MCF 10A (cell line): ENCODE measurements at regions of chr13 and their contacts with region 1.

Region 1: GRCh38 chr13:33228648-33229445 is 56.7 kb downstream of the STARD13 start:
- DNase-seq: peak; percentile 61
- H3K4me3 Mint-ChIP-seq: peak overlapping the region; percentile 9
- H3K27ac Mint-ChIP-seq: peak overlapping the region; percentile 46
- H3K4me1 Mint-ChIP-seq: peaks cover 49% of the 10 kb centered on the region
- H3K27me3 Mint-ChIP-seq: no peaks in the 10 kb centered on the region
- CTCF ChIP-seq: peak; percentile 89

Region 2: GRCh38 chr13:33153421-33154404 is 75.1 kb before region 1 on chr13:
- CTCF ChIA-PET with region 1: no interaction called
- POLR2A ChIA-PET with region 1: no interaction called
- intact Hi-C with region 1: no loop called
- DNase-seq: no peak
- H3K4me3 Mint-ChIP-seq: no peak overlapping the region
- H3K27ac Mint-ChIP-seq: no peak overlapping the region
- H3K4me1 Mint-ChIP-seq: peaks cover 16% of the 10 kb centered on the region
- H3K27me3 Mint-ChIP-seq: no peaks in the 10 kb centered on the region
- CTCF ChIP-seq: no peak

Region 3: DNA sequence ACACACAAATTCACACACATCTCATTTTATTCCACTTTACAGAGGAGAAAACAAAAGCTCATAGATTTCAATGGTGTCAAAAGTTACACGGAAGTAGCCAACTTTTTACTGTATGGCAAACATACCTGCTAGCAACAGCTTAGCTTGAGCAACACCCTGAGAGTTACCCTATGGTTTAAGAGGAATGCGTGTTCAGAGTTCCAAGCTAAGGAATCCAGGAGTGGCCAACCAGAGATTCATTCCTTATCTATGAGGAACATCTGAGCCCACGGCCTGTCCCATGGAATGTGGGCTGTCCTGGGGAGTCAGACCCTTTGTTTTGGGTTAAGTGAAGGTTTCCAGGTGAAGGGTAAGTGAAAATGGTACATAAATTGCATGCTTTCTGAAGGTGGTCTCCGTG is 10.8 kb before region 1 on chr13:
- CTCF ChIA-PET with region 1: interaction called, 10 read pairs
- POLR2A ChIA-PET with region 1: interaction called, 5 read pairs
- intact Hi-C with region 1: no loop called
- DNase-seq: peak; percentile 62
- H3K4me3 Mint-ChIP-seq: peak overlapping the region; percentile 37
- H3K27ac Mint-ChIP-seq: peak overlapping the region; percentile 94
- H3K4me1 Mint-ChIP-seq: peaks cover 67% of the 10 kb centered on the region
- H3K27me3 Mint-ChIP-seq: no peaks in the 10 kb centered on the region
- CTCF ChIP-seq: no peak

Region 4: DNA sequence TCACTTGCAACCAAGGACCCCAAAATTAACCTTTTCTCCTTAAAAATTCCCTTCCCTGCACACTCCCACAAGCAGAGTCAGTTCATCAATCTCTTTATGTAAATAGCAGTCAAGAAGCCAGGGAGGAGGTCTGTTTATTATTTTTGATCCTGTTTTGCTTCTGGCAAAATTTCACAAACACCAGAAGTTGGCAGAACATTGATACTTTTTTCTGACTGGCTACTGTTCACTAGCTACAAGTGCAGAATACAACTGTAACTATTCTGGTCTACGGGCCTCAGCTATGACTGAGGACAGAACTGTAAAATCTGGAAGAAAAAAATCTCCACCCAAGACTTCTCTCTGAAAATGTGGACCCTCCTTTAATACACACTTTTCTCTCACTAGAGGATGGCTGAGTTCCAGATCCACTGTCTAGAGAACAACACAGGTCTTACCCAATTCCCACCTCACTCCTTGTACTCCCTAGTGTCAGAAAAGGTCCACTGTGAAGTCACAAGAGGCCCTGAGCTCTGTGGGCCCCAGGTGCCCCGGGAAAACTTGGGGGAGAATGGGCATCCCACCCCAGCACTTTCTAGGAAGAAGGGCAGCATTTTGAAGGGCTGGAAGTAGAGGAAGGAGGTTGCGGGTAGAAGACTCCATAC is 42.2 kb after region 1 on chr13:
- CTCF ChIA-PET with region 1: interaction called, 27 read pairs
- POLR2A ChIA-PET with region 1: interaction called, 7 read pairs
- intact Hi-C with region 1: no loop called
- DNase-seq: peak; percentile 71
- H3K4me3 Mint-ChIP-seq: peak overlapping the region; percentile 33
- H3K27ac Mint-ChIP-seq: peak overlapping the region; percentile 96
- H3K4me1 Mint-ChIP-seq: peaks cover 64% of the 10 kb centered on the region
- H3K27me3 Mint-ChIP-seq: no peaks in the 10 kb centered on the region
- CTCF ChIP-seq: no peak

Region 5: GRCh38 chr13:33312150-33312860 is 83.5 kb after region 1 on chr13:
- CTCF ChIA-PET with region 1: interaction called, 10 read pairs
- POLR2A ChIA-PET with region 1: interaction called, 3 read pairs
- intact Hi-C with region 1: loop called (anchors 1 kb)
- DNase-seq: peak; percentile 54
- H3K4me3 Mint-ChIP-seq: no peak overlapping the region
- H3K27ac Mint-ChIP-seq: no peak overlapping the region
- H3K4me1 Mint-ChIP-seq: peaks cover 5% of the 10 kb centered on the region
- H3K27me3 Mint-ChIP-seq: no peaks in the 10 kb centered on the region
- CTCF ChIP-seq: peak; percentile 59

Region 6: GRCh38 chr13:33441015-33441414 is 212.2 kb after region 1 on chr13:
- CTCF ChIA-PET with region 1: interaction called, 3 read pairs
- POLR2A ChIA-PET with region 1: no interaction called
- intact Hi-C with region 1: loop called (anchors 2 kb)
- DNase-seq: peak; percentile 58
- H3K4me3 Mint-ChIP-seq: no peak overlapping the region
- H3K27ac Mint-ChIP-seq: peak overlapping the region; percentile 3
- H3K4me1 Mint-ChIP-seq: peaks cover 6% of the 10 kb centered on the region
- H3K27me3 Mint-ChIP-seq: no peaks in the 10 kb centered on the region
- CTCF ChIP-seq: peak; percentile 38